WTC11 (cell line): ENCODE measurements at regions of chr16 and their contacts with region 1.

Region 1: DNA sequence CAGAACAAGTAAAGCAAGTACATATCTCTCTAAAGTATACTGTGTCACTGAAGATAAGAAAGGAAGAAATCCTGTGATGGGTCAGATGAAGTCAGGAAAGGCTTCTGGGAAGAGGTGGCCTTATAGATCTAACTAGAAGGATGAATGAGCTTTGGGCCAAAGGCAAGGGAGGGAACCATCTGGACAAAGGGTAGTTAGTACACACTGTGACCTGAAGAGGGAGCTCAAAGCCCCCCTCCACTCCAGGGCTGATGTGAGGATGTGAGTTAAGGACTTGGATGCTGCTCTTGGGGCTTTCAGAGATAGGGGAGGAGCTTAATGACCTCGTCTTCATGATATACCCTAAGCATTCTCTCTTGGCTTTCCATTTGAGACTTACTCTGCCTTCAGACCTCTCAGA is 185.3 kb upstream of the CACNG3 start:
- DNase-seq: peak; percentile 70
- ATAC-seq: peak; percentile 100
- H3K4me3 Mint-ChIP-seq: no peak overlapping the region
- H3K27ac Mint-ChIP-seq: no peak overlapping the region; the same call in 1 of the 2 replicates
- H3K4me1 Mint-ChIP-seq: peaks cover 11% of the 10 kb centered on the region
- H3K27me3 Mint-ChIP-seq: peaks cover 3% of the 10 kb centered on the region; the same call in 1 of the 2 replicates
- CTCF ChIP-seq: peak; percentile 55

Region 2: GRCh38 chr16:23826528-23827045 is 244.3 kb before region 1 on chr16:
- CTCF ChIA-PET with region 1: no interaction called
- POLR2A ChIA-PET with region 1: no interaction called
- DNase-seq: no peak
- ATAC-seq: no peak
- H3K4me3 Mint-ChIP-seq: no peak overlapping the region
- H3K27ac Mint-ChIP-seq: no peak overlapping the region
- H3K4me1 Mint-ChIP-seq: no peaks in the 10 kb centered on the region
- H3K27me3 Mint-ChIP-seq: peaks cover 43% of the 10 kb centered on the region
- CTCF ChIP-seq: no peak

Region 3: DNA sequence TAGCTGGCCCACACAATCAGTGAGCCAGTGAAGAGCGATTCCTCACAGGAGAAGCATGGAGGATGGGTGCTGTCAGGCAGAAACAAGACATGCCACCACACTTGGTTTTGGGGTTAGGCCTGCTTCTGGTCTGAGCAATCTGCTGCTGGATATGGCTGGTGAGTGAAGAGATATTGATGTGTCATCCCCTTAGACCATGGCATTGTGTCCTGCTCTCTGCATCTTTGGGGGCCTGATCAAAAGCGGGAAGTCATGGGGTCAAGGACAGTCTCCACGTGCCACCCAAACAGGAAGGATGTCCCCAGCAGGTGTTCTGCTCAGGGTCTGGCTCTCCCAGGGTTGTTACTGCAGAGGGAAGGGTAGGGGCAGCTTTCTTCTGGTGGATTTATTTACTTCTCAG is 94.3 kb before region 1 on chr16:
- CTCF ChIA-PET with region 1: no interaction called
- POLR2A ChIA-PET with region 1: no interaction called
- DNase-seq: no peak
- ATAC-seq: no peak
- H3K4me3 Mint-ChIP-seq: no peak overlapping the region
- H3K27ac Mint-ChIP-seq: no peak overlapping the region
- H3K4me1 Mint-ChIP-seq: peaks cover 20% of the 10 kb centered on the region
- H3K27me3 Mint-ChIP-seq: peaks cover 6% of the 10 kb centered on the region
- CTCF ChIP-seq: no peak

Region 4: DNA sequence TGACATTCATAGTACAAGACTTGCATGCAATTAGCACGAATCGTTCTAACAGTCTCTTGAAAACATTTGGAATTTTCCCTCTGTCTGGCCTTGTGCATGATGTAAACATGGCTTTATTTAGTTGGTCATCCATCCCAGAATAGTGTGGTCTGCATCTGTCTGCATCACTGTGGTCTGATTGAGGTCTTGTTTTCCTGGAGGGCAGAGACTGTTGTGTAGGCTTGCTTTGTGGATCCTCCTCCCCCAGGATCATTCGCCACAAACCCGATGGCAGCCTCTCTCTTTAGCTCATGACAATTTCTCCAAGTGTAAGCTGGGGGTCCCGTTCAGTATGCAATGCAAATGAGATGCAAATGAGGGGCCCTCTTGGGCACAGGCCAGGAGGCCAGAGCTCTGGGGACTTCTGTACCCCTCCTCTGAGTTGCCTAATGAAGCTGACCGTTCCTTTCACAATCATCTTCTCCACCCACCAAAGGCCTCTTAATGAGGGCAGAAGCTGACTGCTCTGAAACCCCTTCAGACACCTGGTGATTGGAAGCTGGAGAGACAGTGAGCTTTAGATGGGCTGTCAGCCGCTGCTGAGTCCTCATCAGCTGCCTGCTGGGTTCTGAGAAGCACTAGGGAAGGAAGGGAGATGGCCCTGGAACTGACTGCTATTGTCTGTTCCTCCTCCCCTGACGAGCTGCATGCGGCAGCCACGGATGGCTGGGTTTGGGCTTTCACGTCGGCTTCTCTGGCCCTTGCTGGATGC is 15.9 kb before region 1 on chr16:
- CTCF ChIA-PET with region 1: interaction called, 30 read pairs
- POLR2A ChIA-PET with region 1: interaction called, 6 read pairs
- DNase-seq: peak; percentile 46
- ATAC-seq: peak; percentile 76
- H3K4me3 Mint-ChIP-seq: no peak overlapping the region
- H3K27ac Mint-ChIP-seq: peak overlapping the region; percentile 35; the same call in 1 of the 2 replicates
- H3K4me1 Mint-ChIP-seq: peaks cover 68% of the 10 kb centered on the region
- H3K27me3 Mint-ChIP-seq: no peaks in the 10 kb centered on the region; the same call in 1 of the 2 replicates
- CTCF ChIP-seq: no peak

Region 5: DNA sequence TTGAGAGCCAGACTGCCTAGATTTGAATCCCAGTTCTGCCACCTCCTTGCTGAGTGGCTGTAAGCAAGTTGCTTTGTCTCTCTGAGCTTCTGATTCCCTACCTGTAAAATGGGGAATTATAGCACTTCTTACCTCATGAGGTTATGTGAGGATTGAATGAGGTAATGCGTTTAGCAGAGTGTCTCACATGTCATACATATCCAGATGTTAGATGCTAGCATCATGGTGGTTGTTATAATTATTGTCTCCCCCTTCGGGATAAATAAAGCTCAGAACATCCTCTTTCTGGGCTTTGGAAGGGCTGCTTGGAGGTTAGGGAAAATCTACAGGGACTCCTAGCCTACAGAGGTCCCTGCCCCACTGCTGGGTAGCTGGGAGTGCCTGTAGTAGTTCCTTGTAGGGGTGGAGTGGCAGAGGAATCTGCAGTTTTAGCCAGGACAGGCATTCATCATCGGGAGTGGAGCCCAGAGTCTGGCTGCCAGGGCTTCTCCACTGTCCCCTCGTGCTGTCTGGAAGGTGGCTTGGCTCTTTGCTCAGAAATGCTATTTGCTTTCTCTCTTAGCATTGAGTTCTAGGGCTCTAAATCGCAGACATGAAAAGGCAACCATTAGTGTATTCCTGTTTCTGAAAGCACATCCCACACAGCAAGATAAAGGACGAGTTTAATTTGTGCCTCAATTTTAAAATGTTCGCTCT is 47.4 kb after region 1 on chr16:
- CTCF ChIA-PET with region 1: interaction called, 10 read pairs
- POLR2A ChIA-PET with region 1: interaction called, 3 read pairs
- DNase-seq: no peak
- ATAC-seq: peak; percentile 39
- H3K4me3 Mint-ChIP-seq: no peak overlapping the region
- H3K27ac Mint-ChIP-seq: peak overlapping the region; percentile 64; the same call in 1 of the 2 replicates
- H3K4me1 Mint-ChIP-seq: peaks cover 43% of the 10 kb centered on the region
- H3K27me3 Mint-ChIP-seq: no peaks in the 10 kb centered on the region; the same call in 1 of the 2 replicates
- CTCF ChIP-seq: no peak

Region 6: GRCh38 chr16:24151482-24151939 is 80.7 kb after region 1 on chr16:
- CTCF ChIA-PET with region 1: interaction called, 25 read pairs
- POLR2A ChIA-PET with region 1: no interaction called
- DNase-seq: no peak
- ATAC-seq: peak; percentile 84
- H3K4me3 Mint-ChIP-seq: no peak overlapping the region
- H3K27ac Mint-ChIP-seq: peak overlapping the region; percentile 43; the same call in 1 of the 2 replicates
- H3K4me1 Mint-ChIP-seq: peaks cover 20% of the 10 kb centered on the region
- H3K27me3 Mint-ChIP-seq: no peaks in the 10 kb centered on the region
- CTCF ChIP-seq: no peak

Region 7: DNA sequence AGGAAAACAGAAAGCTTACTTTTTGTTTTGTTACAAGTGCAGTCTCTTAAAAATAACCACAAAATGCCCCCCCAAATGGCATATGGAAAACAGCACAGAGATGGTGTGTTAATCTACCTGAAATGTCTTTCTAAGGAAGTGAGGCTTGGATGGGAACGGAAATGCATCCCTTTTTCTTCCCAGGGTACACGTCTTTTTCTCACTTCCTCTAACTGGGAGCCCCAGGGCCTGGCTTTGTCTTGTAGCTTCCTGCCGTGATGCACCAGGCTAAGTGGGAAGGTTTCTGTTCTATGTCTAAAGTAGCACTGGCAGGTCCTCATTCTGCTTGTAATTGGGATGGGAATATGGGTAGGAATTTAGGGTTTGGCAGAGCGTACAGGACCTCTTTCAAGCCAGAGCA is 132.8 kb after region 1 on chr16:
- CTCF ChIA-PET with region 1: interaction called, 14 read pairs
- POLR2A ChIA-PET with region 1: no interaction called
- DNase-seq: no peak
- ATAC-seq: no peak
- H3K4me3 Mint-ChIP-seq: no peak overlapping the region
- H3K27ac Mint-ChIP-seq: no peak overlapping the region
- H3K4me1 Mint-ChIP-seq: peaks cover 30% of the 10 kb centered on the region
- H3K27me3 Mint-ChIP-seq: no peaks in the 10 kb centered on the region; the same call in 1 of the 2 replicates
- CTCF ChIP-seq: no peak

Region 8: DNA sequence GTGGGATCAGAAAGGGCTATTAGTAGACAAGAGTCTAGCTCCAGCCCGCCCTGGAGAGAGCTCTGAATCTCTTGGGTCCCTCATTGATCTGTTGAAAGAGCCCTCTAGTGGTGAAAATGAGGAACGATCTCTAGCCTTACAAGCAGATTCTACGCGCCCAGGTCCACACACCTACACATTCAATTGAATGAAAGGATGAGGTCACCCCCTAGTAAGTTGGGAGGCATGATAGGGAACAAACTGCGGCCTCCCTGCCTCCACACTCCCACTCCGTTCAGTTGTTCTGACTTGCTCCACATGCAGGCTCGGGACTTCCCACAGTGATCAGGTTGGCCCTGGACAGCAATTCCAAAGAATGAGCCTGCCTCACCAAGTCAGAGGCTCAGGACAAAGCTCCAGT is 182.3 kb after region 1 on chr16:
- CTCF ChIA-PET with region 1: interaction called, 224 read pairs
- POLR2A ChIA-PET with region 1: no interaction called
- DNase-seq: peak; percentile 58
- ATAC-seq: peak; percentile 76
- H3K4me3 Mint-ChIP-seq: no peak overlapping the region
- H3K27ac Mint-ChIP-seq: no peak overlapping the region
- H3K4me1 Mint-ChIP-seq: peaks cover 28% of the 10 kb centered on the region
- H3K27me3 Mint-ChIP-seq: peaks cover 40% of the 10 kb centered on the region
- CTCF ChIP-seq: peak; percentile 79

Region 9: DNA sequence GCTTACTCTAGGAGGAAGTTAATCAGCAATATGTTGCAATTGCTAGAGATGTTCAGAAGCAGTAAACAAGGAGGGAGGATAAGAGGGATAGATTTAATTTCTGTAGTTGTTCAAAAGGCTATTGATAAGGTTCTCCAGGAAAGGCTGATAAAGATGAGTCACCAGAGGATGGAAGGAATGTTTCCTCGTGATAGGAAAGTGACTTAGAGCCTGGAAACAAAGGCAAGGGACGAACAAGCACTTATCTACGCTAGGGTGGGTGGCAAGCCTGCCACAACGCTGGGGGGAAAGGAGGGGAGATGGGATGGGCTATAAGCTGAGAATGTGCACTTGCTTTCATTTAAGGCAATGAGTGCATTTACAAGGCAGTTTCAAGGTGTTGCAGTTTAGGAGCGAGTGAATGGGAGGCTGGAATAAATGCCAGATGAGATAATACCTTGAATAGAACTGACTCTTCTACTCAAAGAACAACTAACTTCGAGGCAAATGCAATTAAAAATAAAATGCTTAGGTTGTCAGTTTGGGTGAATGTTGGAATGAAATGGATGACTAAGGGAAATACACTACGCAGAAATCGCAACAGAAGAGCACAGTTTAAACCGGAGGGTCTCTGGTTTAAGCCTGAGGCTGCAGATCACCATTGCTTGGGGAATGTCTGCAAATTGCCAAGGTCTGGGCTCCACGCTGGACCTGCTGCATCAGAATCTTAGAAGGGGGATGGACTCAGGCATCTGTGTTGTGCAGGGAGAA is 392.5 kb after region 1 on chr16:
- CTCF ChIA-PET with region 1: no interaction called
- POLR2A ChIA-PET with region 1: no interaction called
- DNase-seq: no peak
- ATAC-seq: no peak
- H3K4me3 Mint-ChIP-seq: no peak overlapping the region
- H3K27ac Mint-ChIP-seq: no peak overlapping the region
- H3K4me1 Mint-ChIP-seq: 0 out of 2 replicates have a peak, but pooled peaks cover 4% of the 10 kb centered on the region
- H3K27me3 Mint-ChIP-seq: peaks cover 4% of the 10 kb centered on the region; the same call in 1 of the 2 replicates
- CTCF ChIP-seq: no peak